ENCODE measurements at regions of chr18 and their contacts with region 1.

Region 1: GRCh38 chr18:69071680-69072079 is 273.8 kb downstream of the CCDC102B start:
- DNase-seq: no peak
- ATAC-seq: no peak
- H3K4me3 ChIP-seq: no peak overlapping the region
- H3K27ac ChIP-seq: no peak overlapping the region
- H3K4me1 ChIP-seq: no peaks in the 10 kb centered on the region
- H3K27me3 ChIP-seq: no peaks in the 10 kb centered on the region

Region 2: GRCh38 chr18:69085951-69086350 is 14.3 kb after region 1 on chr18:
- intact Hi-C with region 1: loop called in 1 of 2 experiments (anchors 2 kb)
- DNase-seq: no peak
- ATAC-seq: no peak
- H3K4me3 ChIP-seq: no peak overlapping the region
- H3K27ac ChIP-seq: no peak overlapping the region
- H3K4me1 ChIP-seq: no peaks in the 10 kb centered on the region
- H3K27me3 ChIP-seq: no peaks in the 10 kb centered on the region

Region 3: GRCh38 chr18:69216321-69216720 is 144.6 kb after region 1 on chr18:
- intact Hi-C with region 1: no loop called
- DNase-seq: no peak
- ATAC-seq: no peak
- H3K4me3 ChIP-seq: no peak overlapping the region
- H3K27ac ChIP-seq: no peak overlapping the region
- H3K4me1 ChIP-seq: no peaks in the 10 kb centered on the region
- H3K27me3 ChIP-seq: no peaks in the 10 kb centered on the region

Measured in aorta (tissue), 5 donors.